ENCODE measurements at regions of chr19 and their contacts with region 1.

Region 1: GRCh38 chr19:5013761-5014160 is 44.8 kb downstream of the KDM4B start:
- DNase-seq: no peak
- H3K4me3 Mint-ChIP-seq: no peak overlapping the region
- H3K27ac Mint-ChIP-seq: no peak overlapping the region
- H3K4me1 Mint-ChIP-seq: peaks cover 2% of the 10 kb centered on the region
- H3K27me3 Mint-ChIP-seq: no peaks in the 10 kb centered on the region

Region 2: GRCh38 chr19:5001615-5002014 is 12.1 kb before region 1 on chr19:
- CTCF ChIA-PET with region 1: interaction called, 10 read pairs
- intact Hi-C with region 1: no loop called
- DNase-seq: peak; percentile 46
- H3K4me3 Mint-ChIP-seq: no peak overlapping the region
- H3K27ac Mint-ChIP-seq: no peak overlapping the region
- H3K4me1 Mint-ChIP-seq: peaks cover 6% of the 10 kb centered on the region
- H3K27me3 Mint-ChIP-seq: no peaks in the 10 kb centered on the region

Region 3: DNA sequence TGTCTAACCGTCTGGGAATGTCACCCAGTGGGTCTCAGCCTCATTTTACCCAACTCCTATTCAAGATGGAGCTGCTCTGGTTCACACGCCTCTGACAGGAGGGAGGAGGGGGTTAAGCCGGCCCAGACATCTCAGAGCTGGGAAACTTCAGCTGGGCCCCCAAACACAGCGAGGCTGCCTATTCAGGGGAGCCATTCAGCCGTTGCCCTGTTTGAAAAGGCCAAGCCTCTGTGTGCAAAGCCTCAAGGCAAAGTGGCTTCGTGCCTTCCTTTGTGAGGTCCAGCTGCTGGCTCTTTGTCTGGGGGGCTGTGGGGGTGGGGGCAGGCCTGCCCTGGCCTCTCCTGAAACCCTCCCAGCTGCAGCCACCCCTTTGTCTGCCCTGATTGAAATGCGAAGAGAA is 179.4 kb after region 1 on chr19:
- CTCF ChIA-PET with region 1: no interaction called
- intact Hi-C with region 1: no loop called
- DNase-seq: no peak
- H3K4me3 Mint-ChIP-seq: no peak overlapping the region
- H3K27ac Mint-ChIP-seq: no peak overlapping the region
- H3K4me1 Mint-ChIP-seq: no peaks in the 10 kb centered on the region
- H3K27me3 Mint-ChIP-seq: peaks cover 3% of the 10 kb centered on the region